ENCODE measurements at regions of chr6 and their contacts with region 1.

Region 1: DNA sequence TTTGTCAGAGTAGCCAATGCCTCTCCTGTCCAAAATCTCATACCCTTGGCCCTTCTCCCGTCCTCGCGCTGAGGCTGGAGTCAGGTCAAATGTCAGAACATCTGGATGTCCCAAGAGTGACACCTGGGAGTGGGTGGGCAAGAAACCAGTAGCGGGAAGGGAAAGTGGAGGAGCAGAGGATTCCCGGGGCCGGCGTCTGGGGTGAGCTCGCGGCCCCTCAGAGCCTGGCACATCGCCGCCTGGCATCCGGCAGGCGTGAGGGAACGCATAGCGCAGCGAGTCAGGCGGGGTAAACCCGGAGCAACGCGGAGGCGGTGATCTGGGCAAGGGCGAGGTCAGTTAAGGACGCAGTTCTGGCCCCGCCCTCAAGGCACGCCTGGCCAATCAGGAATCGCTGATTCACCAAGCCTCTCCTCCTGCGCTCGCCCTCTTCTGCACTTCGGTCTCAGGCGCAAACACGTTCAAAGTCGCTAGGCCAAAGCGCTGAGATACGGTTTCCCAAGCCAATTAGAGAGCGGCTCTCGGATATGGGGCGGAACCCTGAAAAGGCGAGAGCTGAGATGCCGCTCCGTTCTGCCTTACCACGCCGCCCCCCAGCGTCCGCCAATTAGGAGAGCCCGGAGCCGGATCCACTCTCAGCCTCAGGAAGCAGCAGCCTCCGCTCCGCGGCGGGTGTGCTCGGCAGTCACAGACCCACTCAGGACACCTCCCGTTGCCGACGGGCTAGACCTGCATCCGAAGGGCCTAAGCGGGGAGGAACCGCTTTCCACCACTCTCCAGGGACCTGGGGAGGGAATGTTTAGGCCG is 22.5 kb downstream of the VPS52 start:
- DNase-seq: peak; percentile 96 to 97
- H3K4me3 ChIP-seq: peak overlapping the region; percentile 49 to 66
- H3K27ac ChIP-seq: peak overlapping the region; percentile 92 to 95
- H3K4me1 ChIP-seq: no peaks in the 10 kb centered on the region
- H3K27me3 ChIP-seq: no peaks in the 10 kb centered on the region
- CTCF ChIP-seq: peak in 3 of 4 experiments; percentile 21 to 31 (median 22)
- POLR2A ChIP-seq: peak; percentile 68 to 72

Region 2: GRCh38 chr6:33161354-33162331 is 87.5 kb before region 1 on chr6:
- intact Hi-C with region 1: loop called (anchors 5 kb)
- DNase-seq: peak; percentile 72 to 83
- H3K4me3 ChIP-seq: peak overlapping the region; percentile 40 to 46
- H3K27ac ChIP-seq: peak overlapping the region in 1 of 2 donors; percentile 47
- H3K4me1 ChIP-seq: peaks cover 0 to 6% of the 10 kb centered on the region in 2 donors
- H3K27me3 ChIP-seq: no peaks in the 10 kb centered on the region
- CTCF ChIP-seq: peak; percentile 90 to 97 (median 92)
- POLR2A ChIP-seq: no peak

Region 3: GRCh38 chr6:33299237-33299944 is 50.3 kb after region 1 on chr6:
- intact Hi-C with region 1: no loop called
- DNase-seq: peak; percentile 90 to 93
- H3K4me3 ChIP-seq: peak overlapping the region; percentile 55 to 66
- H3K27ac ChIP-seq: peak overlapping the region; percentile 95
- H3K4me1 ChIP-seq: peaks cover 0 to 7% of the 10 kb centered on the region in 2 donors
- H3K27me3 ChIP-seq: no peaks in the 10 kb centered on the region
- CTCF ChIP-seq: peak; percentile 49 to 62 (median 61)
- POLR2A ChIP-seq: peak; percentile 25 to 65

Measured in uterus (tissue), 4 donors.